A549 (cell line): ENCODE measurements at regions of chr16 and their contacts with region 1.

Region 1: DNA sequence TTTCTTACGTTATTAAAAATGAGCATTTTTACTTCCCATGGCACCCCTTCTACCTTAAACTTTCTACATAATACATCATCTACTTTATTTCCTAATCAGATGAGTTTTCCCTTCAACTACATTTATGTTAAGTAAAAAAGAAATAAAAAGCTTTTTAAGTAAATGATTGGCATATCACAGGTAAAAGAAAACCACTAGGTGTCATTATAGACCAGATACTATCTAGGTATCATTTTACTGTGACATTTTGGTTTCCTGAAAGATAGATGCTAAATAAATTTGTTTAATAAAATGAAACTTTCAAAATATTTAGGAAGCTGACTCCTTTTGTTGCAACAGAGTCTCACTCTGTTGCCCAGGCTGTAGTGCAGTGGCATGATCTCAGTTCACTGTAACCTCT is 3.8 kb upstream of the CMTM1 start:
- DNase-seq: no peak
- ATAC-seq: no peak
- H3K4me3 ChIP-seq: no peak overlapping the region
- H3K27ac ChIP-seq: no peak overlapping the region
- H3K4me1 ChIP-seq: no peaks in the 10 kb centered on the region
- CTCF ChIP-seq: peak; percentile 33; the same call in 2 of the 3 replicates
- EP300 ChIP-seq: no peak
- POLR2A ChIP-seq: no peak
- RAD21 ChIP-seq: peak; percentile 34 to 38; a peak in 3 of 5 replicates

Region 2: DNA sequence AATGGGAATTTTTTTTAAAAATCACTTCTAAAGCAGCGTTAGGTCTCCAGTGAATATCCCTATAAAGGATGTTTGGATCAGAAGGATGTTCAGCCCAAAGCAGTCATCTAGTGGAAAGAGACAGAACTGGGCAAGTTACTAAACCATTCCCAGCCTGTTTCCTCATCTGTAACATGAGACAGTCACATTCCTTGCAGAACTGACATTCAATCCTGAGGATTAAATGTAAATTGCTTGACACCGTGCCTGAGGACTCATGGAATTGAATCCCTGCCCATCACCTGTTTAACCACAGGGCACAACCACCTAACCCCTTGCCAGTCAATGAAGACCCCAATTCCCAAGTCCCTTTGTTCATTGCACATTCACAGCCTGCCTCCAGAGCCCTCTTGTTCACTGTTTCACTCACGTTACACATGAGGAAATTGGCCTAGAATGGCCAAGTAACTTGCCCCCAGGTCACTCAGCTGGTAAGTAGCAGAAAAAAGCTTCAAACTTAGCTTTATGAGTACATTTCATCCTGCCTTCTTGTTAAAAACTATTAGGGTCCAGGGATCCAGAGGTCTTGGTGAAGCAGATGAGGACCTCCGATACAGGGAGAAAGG is 18.3 kb after region 1 on chr16:
- CTCF ChIA-PET with region 1: interaction called, 24 read pairs
- POLR2A ChIA-PET with region 1: no interaction called
- DNase-seq: no peak
- ATAC-seq: peak in 1 of 2 experiments; percentile 40; a peak in 3 of 6 replicates
- H3K4me3 ChIP-seq: no peak overlapping the region
- H3K27ac ChIP-seq: no peak overlapping the region
- H3K4me1 ChIP-seq: no peaks in the 10 kb centered on the region
- CTCF ChIP-seq: no peak
- EP300 ChIP-seq: no peak
- POLR2A ChIP-seq: no peak
- RAD21 ChIP-seq: no peak

Region 3: DNA sequence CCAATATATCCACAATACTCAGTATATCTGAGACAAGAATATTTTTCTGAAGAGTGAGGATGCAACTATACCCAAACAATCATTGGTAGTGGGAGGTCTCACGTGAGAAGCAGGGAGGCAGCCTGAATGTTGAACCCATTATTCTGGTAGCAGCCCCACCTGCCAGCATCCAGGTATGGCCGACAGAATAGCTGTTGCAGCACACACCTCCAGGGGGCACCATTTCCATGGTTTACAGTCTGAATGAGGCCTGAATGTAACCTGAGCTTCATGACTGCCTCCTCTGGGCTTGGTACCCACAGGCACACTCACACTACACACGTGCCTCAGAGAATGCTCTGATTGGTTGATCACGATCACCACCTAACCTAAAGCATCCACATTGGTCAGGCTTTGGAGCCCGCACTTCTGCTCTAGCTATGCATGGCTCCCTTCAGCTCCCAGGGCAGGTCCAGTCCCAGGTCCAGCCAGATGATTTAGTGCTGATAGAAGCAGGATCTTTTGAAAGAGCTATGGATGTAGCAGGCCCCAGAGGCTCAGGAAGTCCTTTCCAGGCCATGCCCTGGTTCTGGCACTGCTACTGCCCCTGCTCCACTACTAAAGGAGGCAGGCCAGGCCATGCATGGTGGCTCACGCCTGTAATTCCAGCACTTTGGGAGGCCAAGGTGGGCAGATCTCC is 455.5 kb after region 1 on chr16:
- CTCF ChIA-PET with region 1: no interaction called
- POLR2A ChIA-PET with region 1: no interaction called
- DNase-seq: peak; percentile 93 to 97
- ATAC-seq: peak; percentile 89 to 98
- H3K4me3 ChIP-seq: no peak overlapping the region
- H3K27ac ChIP-seq: peak overlapping the region in 1 of 2 experiments; percentile 49; a peak in 2 of 6 replicates
- H3K4me1 ChIP-seq: peaks cover 3% of the 10 kb centered on the region; the same call in 2 of the 3 replicates
- CTCF ChIP-seq: peak; percentile 84
- EP300 ChIP-seq: no peak
- POLR2A ChIP-seq: no peak
- RAD21 ChIP-seq: peak; percentile 84 to 92